Activated CD4-positive, alpha-beta T cell treated with anti-CD3 and anti-CD28 coated beads for 36 hours (primary cell): ENCODE measurements at regions of chr9 and their contacts with region 1.

Region 1: GRCh38 chr9:99819856-99820684 is 1.6 kb upstream of the NR4A3 start:
- DNase-seq: peak; percentile 95
- ATAC-seq: peak; percentile 39
- H3K4me3 Mint-ChIP-seq: peak overlapping the region; percentile 88
- H3K27ac Mint-ChIP-seq: peak overlapping the region; percentile 94
- H3K4me1 Mint-ChIP-seq: peaks cover 42% of the 10 kb centered on the region
- H3K27me3 Mint-ChIP-seq: peaks cover 4% of the 10 kb centered on the region

Region 2: DNA sequence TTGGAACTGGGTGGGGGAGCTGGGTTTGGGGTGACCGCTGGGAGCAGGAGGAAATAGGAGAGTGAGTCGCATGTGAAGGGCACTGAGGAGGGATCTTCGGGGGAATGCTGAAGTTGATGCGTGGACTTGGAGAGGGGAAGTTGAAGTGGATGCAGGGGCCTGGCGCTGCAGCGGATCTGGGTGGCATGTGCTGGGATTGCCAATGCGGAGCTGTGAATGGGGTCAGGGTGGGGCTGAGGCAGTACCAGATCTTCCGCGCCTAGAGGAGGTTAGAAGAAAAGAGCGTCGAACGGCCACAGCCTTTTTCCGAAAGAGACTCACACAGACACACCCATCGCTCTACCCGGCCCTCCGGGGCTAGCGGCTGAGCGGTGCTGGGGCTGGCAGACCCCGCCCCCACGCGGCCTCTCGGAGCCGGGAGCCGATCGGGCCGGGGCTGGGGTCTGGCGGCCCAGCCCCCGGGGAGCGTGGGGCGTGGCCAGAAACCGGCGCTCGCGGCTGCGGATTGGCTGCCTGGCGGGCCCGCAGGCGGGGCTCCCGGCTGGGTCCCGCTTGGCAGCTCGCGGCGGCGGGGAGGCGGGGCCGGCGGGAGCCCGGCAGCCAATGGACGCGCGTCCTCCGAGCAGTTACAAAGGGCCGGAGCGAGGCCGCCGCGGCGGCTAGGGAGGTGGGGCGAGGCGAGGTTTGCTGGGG is 715.5 kb before region 1 on chr9 and contains the start of gene TGFBR1:
- CTCF ChIA-PET with region 1: no interaction called
- POLR2A ChIA-PET with region 1: no interaction called
- intact Hi-C with region 1: loop called (anchors 2 to 10 kb)
- DNase-seq: peak; percentile 95
- ATAC-seq: peak; percentile 89
- H3K4me3 Mint-ChIP-seq: peak within 1 kb of the TSS; percentile 79
- H3K27ac Mint-ChIP-seq: peak within 1 kb of the TSS; percentile 83
- H3K4me1 Mint-ChIP-seq: peaks cover 49% of the 10 kb centered on the region
- H3K27me3 Mint-ChIP-seq: no peaks in the 10 kb centered on the region
- total RNA-seq, gene TGFBR1: 18.6 to 19.3 TPM

Region 3: DNA sequence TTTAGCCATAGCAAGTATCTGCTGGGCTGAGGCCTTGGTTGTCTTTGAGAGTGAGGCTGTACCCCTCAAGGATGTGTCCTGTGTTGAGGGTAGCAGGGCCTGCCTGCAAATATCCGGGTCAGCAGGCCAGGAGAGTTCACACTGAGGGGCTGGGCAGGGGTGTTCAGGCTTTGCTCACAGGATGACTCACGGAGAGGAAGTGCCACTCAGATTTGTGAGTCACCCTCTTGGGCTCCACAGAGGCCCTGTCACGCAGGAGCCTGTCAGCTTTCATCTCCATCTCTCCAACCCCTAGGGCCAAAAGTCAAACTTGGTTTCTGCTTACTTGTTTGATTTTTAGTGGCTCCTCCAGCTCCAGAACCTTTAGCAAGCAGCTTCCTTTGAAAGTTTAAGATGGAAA is 386.5 kb before region 1 on chr9:
- CTCF ChIA-PET with region 1: no interaction called
- POLR2A ChIA-PET with region 1: no interaction called
- intact Hi-C with region 1: loop called in 1 of 2 experiments (anchors 5 kb)
- DNase-seq: peak; percentile 79
- ATAC-seq: peak; percentile 100
- H3K4me3 Mint-ChIP-seq: no peak overlapping the region
- H3K27ac Mint-ChIP-seq: peak overlapping the region; percentile 80
- H3K4me1 Mint-ChIP-seq: peaks cover 13% of the 10 kb centered on the region
- H3K27me3 Mint-ChIP-seq: no peaks in the 10 kb centered on the region

Region 4: GRCh38 chr9:99954819-99955218 is 134.7 kb after region 1 on chr9:
- CTCF ChIA-PET with region 1: interaction called, 13 read pairs
- POLR2A ChIA-PET with region 1: interaction called, 4 read pairs
- intact Hi-C with region 1: loop called (anchors 2 kb)
- DNase-seq: no peak
- ATAC-seq: peak; percentile 91
- H3K4me3 Mint-ChIP-seq: no peak overlapping the region
- H3K27ac Mint-ChIP-seq: peak overlapping the region; percentile 47
- H3K4me1 Mint-ChIP-seq: peaks cover 28% of the 10 kb centered on the region
- H3K27me3 Mint-ChIP-seq: no peaks in the 10 kb centered on the region

Region 5: DNA sequence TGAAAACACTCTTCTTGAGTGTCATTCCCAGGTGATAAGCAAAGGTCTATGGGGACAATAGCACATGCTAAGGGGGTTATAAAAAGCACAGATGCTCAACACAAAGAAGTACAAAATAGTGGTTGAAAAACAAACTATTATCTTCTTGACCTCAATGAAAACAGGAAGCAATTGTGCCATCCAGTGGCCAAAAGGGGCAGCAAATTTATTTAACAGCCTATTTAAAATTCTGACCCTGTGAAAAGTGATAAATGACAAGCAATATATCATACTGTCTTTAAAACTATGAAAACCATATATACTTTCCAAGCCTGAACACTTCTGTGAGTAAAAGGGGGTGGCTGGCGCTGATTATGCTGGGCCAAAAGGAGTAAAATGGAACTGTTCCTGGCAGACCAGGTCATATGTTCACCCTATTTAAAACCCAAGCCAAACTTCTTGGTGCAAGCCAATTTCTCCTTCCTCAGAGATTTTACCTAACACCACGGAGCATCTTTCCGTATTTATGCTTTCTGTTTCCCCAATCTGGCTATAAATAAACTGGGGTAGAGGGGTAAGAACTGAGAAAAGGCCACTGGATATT is 503.0 kb after region 1 on chr9:
- CTCF ChIA-PET with region 1: interaction called, 5 read pairs
- POLR2A ChIA-PET with region 1: no interaction called
- intact Hi-C with region 1: loop called in 1 of 2 experiments (anchors 10 kb)
- DNase-seq: peak; percentile 49
- ATAC-seq: no peak
- H3K4me3 Mint-ChIP-seq: no peak overlapping the region
- H3K27ac Mint-ChIP-seq: no peak overlapping the region
- H3K4me1 Mint-ChIP-seq: peaks cover 13% of the 10 kb centered on the region
- H3K27me3 Mint-ChIP-seq: no peaks in the 10 kb centered on the region

Region 6: GRCh38 chr9:101398068-101398929 is 1578.2 kb after region 1 on chr9 and contains the starts of genes MRPL50 and ZNF189:
- CTCF ChIA-PET with region 1: no interaction called
- POLR2A ChIA-PET with region 1: no interaction called
- intact Hi-C with region 1: loop called in 1 of 2 experiments (anchors 5 kb)
- DNase-seq: peak; percentile 98
- ATAC-seq: peak; percentile 97
- H3K4me3 Mint-ChIP-seq: peak within 1 kb of the TSS; percentile 94
- H3K27ac Mint-ChIP-seq: peak within 1 kb of the TSS; percentile 100
- H3K4me1 Mint-ChIP-seq: peaks cover 67% of the 10 kb centered on the region
- H3K27me3 Mint-ChIP-seq: no peaks in the 10 kb centered on the region
- total RNA-seq, gene MRPL50: 15.5 to 17.0 TPM
- total RNA-seq, gene ZNF189: 10.2 to 13.1 TPM